OCI-LY7 (cell line): ENCODE measurements at regions of chr12 and their contacts with region 1.

Region 1: DNA sequence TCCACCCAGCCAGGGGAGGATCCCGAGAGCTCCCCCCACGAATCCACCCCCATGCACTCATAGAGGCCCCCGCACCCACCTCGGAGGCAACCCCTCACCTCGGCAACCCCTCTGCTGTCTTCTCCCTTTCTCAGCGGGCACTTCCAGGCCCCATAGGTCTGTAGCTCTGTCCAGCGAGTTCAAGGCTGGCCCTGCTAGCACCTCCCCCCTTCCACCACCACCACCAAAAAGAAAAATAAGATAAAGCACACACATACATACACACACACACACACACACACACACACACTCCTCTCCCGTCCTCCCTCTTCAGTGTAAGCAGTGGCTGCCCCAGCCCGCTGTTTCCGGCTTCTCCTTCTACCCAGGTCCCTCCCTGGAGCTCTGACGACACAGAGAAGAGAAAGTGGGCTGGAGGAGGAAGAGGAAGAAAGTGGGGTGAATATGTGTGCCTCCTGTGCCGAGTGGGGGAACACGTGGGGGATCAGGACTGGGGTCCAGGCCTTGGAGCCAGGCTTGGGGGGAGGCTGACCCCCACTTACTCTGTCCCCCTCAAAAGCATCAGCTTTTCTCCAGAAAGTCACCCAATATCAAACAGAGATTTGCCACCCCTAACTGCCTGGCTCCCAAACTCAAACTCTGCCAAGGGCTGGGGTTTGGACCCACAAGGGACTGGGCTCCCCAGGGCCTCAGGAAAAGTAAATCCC is at the start of gene STAT6:
- DNase-seq: peak; percentile 89
- H3K4me3 ChIP-seq: peak within 1 kb of the TSS; percentile 90
- H3K27ac ChIP-seq: peak within 1 kb of the TSS; percentile 75
- H3K4me1 ChIP-seq: peaks cover 35% of the 10 kb centered on the region
- CTCF ChIP-seq: 0 out of 2 replicates have a peak, but pooled peaks have one; percentile 26
- total RNA-seq, gene STAT6: 72.3 and 73.6 TPM in 2 replicates

Region 2: GRCh38 chr12:56751712-56752598 is 359.2 kb before region 1 on chr12 and contains the start of gene PRIM1:
- CTCF ChIA-PET with region 1: no interaction called
- POLR2A ChIA-PET with region 1: interaction called, 4 read pairs
- intact Hi-C with region 1: loop called (anchors 2 kb)
- DNase-seq: peak; percentile 94
- H3K4me3 ChIP-seq: peak within 1 kb of the TSS; percentile 76
- H3K27ac ChIP-seq: peak within 1 kb of the TSS; percentile 94
- H3K4me1 ChIP-seq: peaks cover 25% of the 10 kb centered on the region
- CTCF ChIP-seq: no peak
- total RNA-seq, gene PRIM1: 17.1 and 20.4 TPM in 2 replicates

Region 3: GRCh38 chr12:56839915-56840325 is 271.3 kb before region 1 on chr12:
- CTCF ChIA-PET with region 1: no interaction called
- POLR2A ChIA-PET with region 1: no interaction called
- intact Hi-C with region 1: loop called (anchors 2 kb)
- DNase-seq: peak; percentile 39
- H3K4me3 ChIP-seq: no peak overlapping the region
- H3K27ac ChIP-seq: no peak overlapping the region
- H3K4me1 ChIP-seq: no peaks in the 10 kb centered on the region
- CTCF ChIP-seq: peak; percentile 80

Region 4: DNA sequence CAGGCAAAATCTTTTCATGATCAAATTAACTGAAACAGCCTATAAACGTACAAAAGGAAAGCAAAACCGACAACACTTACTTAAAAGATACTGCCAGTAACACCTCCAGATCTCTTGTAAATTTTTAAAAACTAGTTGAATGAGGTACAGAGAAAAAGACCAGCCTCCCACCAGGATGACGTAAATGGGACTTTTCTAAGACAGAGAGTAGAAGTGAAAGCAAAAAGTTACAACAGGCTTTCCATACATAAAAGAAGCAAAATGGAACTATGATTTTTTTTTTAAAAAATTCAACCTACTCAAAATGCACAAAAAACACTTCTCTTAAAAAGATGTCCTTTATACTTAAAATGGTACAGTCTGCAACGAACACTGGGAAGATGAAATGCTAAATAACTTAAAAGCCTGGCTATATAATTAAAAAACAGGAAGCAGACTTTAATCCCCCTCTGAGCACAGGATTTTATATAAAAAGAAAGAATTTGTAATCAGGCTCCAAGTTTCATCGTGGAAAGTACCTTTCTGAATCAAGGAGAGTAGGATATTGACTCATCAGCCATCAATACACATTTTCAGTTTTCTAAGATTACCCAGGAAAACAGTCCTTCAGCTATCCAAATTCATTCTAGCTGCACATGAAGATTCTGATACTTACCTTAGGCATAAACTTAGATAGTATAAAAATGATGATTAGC is 47.0 kb before region 1 on chr12:
- CTCF ChIA-PET with region 1: interaction called, 26 read pairs
- POLR2A ChIA-PET with region 1: interaction called, 45 read pairs
- intact Hi-C with region 1: loop called (anchors 1 kb)
- DNase-seq: peak; percentile 28
- H3K4me3 ChIP-seq: peak overlapping the region; percentile 12
- H3K27ac ChIP-seq: peak overlapping the region; percentile 46
- H3K4me1 ChIP-seq: peaks cover 19% of the 10 kb centered on the region
- CTCF ChIP-seq: no peak

Region 5: GRCh38 chr12:57078519-57079404 is 32.4 kb before region 1 on chr12 and contains the start of gene NEMP1:
- CTCF ChIA-PET with region 1: interaction called, 5 read pairs
- POLR2A ChIA-PET with region 1: interaction called, 45 read pairs
- intact Hi-C with region 1: no loop called
- DNase-seq: peak; percentile 100
- H3K4me3 ChIP-seq: peak within 1 kb of the TSS; percentile 80
- H3K27ac ChIP-seq: peak within 1 kb of the TSS; percentile 81
- H3K4me1 ChIP-seq: peaks cover 8% of the 10 kb centered on the region
- CTCF ChIP-seq: no peak
- total RNA-seq, gene NEMP1: 39.8 and 45.7 TPM in 2 replicates

Region 6: GRCh38 chr12:57124259-57124877 is 13.2 kb after region 1 on chr12:
- CTCF ChIA-PET with region 1: interaction called, 7 read pairs
- POLR2A ChIA-PET with region 1: interaction called, 10 read pairs
- intact Hi-C with region 1: no loop called
- DNase-seq: peak; percentile 78
- H3K4me3 ChIP-seq: no peak overlapping the region
- H3K27ac ChIP-seq: no peak overlapping the region
- H3K4me1 ChIP-seq: peaks cover 5% of the 10 kb centered on the region
- CTCF ChIP-seq: peak; percentile 98

Region 7: DNA sequence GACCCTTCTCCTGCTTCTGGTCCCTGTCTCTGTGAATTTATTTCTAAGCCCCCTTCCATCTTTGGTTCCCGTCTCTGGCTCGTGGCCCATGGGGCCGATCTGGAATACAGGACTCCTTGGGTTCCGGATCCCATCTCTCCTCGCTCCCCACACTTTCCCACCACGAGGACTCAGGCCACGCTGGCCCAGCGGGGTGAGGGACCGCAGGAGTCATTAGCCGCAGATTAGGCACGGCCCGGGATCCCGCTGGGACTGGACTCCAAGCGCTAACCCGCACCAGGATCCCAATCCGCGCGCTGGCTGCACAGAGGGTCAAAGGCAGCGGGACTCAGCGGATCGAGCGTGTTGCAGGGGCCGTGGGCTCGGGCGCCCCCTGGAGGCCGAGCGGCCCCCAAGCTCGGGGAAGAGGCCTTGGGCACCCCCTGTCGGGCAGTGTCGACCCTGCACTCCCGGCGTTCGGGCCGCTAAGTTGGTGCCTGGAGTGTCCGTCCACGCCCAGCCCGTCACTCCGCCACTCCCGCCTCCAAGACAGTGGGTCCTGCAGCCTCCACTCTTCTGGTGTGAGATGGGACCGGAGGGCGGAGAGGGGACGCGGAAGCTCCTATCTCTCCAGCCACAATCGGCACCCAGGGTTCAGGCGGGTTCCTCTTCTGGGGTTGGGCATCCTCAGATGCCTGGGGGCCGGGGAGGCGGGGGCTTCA is 127.8 kb after region 1 on chr12:
- CTCF ChIA-PET with region 1: no interaction called
- POLR2A ChIA-PET with region 1: no interaction called
- intact Hi-C with region 1: loop called (anchors 5 kb)
- DNase-seq: peak; percentile 90
- H3K4me3 ChIP-seq: peak overlapping the region; percentile 74
- H3K27ac ChIP-seq: peak overlapping the region; percentile 92
- H3K4me1 ChIP-seq: peaks cover 53% of the 10 kb centered on the region
- CTCF ChIP-seq: peak; percentile 100

Region 8: DNA sequence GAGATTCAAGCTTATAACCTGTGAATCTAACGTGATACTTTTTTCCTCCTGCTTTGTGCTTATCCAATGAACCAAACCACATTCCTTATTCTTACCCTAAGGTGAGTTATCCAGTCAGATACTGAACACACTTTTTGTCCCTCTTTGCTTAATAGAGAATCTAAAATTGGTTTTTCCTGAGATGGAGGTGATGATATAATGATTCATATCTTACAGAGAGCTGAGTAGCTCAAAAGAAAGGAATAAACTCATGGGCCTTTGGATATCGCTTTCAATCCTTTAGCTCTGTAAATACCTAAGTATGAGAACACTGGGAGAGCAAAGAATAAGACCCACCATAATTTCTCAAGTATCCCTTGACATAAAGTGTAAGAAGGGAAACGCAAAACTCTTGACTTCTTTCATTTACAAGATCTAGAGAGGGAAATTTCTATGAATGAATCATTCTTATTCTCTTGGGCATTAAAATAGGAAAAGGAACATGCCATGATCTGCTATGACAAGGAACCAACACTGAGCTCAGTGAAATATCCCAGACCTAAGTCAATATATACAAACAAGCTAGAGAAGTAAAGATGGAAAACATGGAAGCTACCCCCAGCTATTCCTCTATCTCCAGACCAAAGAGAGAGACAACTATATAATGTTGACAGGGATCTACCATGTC is 221.6 kb after region 1 on chr12:
- CTCF ChIA-PET with region 1: no interaction called
- POLR2A ChIA-PET with region 1: no interaction called
- intact Hi-C with region 1: no loop called
- DNase-seq: no peak
- H3K4me3 ChIP-seq: no peak overlapping the region
- H3K27ac ChIP-seq: no peak overlapping the region
- H3K4me1 ChIP-seq: no peaks in the 10 kb centered on the region
- CTCF ChIP-seq: no peak

Region 9: DNA sequence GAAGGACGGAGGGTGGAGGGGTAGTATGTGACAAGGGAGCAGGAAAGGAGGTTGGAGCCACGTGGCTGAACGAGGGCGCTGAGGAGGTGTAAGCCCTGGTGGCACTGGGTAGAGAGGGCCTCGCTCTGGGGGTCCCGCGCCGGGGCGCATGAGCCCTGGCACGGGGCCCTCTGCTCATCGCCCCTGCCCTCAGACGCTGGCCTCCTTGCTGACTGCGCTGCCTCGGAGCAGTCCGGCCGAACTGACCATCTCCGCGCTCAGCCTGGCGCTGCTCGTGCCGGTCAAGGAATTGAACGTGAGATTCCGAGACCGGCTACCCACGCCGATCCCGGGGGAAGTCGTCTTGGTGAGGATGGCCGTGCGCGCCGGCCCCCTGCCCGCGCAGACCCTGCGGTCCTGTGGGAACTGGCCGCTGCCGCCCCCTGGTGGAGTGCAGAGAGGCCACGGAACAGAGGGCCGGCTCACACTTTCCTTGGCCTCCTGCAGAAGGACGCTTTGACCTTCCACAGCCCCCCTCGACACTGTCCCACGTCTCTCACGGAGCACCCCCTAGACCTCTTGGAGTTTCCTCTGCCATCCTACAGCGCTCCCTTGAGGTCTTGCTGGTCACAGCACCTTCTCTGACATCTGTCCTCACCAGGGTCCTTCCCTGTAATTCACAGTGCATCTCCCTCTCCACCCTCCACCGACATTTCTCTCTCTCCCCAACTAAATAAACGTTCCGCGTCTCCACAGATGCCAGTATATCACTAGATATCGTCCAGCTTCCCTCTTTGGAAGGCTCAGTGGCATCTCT is 510.5 kb after region 1 on chr12:
- CTCF ChIA-PET with region 1: no interaction called
- POLR2A ChIA-PET with region 1: no interaction called
- intact Hi-C with region 1: no loop called
- DNase-seq: peak; percentile 36
- H3K4me3 ChIP-seq: no peak overlapping the region
- H3K27ac ChIP-seq: no peak overlapping the region
- H3K4me1 ChIP-seq: no peaks in the 10 kb centered on the region
- CTCF ChIP-seq: peak; percentile 79